Activated CD4-positive, alpha-beta memory T cell treated with anti-CD3 and anti-CD28 coated beads for 36 hours (primary cell): ENCODE measurements at regions of chr5 and their contacts with region 1.

Region 1: GRCh38 chr5:133025804-133026663 is at the start of gene ZCCHC10:
- DNase-seq: peak; percentile 95
- H3K4me3 Mint-ChIP-seq: peak within 1 kb of the TSS; percentile 79
- H3K27ac Mint-ChIP-seq: peak within 1 kb of the TSS; percentile 83
- H3K4me1 Mint-ChIP-seq: peaks cover 15% of the 10 kb centered on the region
- H3K27me3 Mint-ChIP-seq: no peaks in the 10 kb centered on the region
- total RNA-seq, gene ZCCHC10: 22.6 to 25.5 TPM

Region 2: DNA sequence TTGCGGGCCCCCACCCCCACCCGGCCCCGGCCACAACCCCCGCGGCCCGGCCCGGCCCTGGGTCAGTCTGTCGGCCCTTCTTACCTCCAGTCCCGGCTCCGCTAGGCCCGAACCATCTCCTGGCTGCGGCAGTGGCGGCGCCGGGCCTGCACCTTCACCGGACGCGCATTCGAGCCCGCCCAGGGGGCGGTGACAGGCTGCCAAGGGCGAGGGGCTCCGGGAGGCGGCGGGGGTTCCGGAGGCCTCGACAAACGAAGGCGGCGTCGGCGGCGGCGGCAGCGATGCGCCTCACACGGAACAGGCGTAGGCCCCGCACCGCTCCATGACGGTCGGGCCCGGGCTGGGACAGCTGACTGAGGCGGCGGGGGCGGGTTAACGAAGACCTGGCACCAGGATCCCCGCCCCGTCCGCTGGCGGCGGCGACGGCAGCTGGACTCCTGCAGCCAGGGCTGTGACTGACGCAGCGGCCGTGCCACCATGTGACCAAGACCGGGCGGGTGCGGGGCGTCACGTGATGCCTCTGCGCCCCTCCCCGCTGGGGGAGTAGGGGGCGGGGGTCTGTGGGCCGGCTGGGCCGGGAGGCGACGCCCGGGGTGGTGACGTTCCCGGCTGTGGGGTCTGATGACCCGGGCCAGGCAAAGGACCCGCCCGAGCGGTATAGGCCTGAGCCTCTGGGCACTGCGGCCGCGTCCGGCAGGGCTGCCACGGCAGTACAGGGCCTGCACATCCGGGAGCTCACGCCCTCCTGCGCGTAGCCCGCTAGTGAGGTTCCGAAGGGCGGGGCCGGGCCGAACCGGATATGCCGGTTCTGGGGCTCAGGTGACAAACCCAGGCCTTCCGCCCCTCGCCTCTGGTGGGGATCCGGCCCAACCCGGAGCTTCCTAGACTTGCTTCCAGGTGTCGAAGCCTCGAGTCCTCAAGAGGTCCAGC is 62.6 kb before region 1 on chr5 and contains the start of gene AFF4:
- CTCF ChIA-PET with region 1: no interaction called
- POLR2A ChIA-PET with region 1: interaction called, 4 read pairs
- intact Hi-C with region 1: loop called (anchors 2 kb)
- DNase-seq: peak; percentile 93
- H3K4me3 Mint-ChIP-seq: peak within 1 kb of the TSS; percentile 93
- H3K27ac Mint-ChIP-seq: peak within 1 kb of the TSS; percentile 98
- H3K4me1 Mint-ChIP-seq: peaks cover 29% of the 10 kb centered on the region
- H3K27me3 Mint-ChIP-seq: no peaks in the 10 kb centered on the region
- total RNA-seq, gene AFF4: 21.9 to 22.1 TPM

Region 3: DNA sequence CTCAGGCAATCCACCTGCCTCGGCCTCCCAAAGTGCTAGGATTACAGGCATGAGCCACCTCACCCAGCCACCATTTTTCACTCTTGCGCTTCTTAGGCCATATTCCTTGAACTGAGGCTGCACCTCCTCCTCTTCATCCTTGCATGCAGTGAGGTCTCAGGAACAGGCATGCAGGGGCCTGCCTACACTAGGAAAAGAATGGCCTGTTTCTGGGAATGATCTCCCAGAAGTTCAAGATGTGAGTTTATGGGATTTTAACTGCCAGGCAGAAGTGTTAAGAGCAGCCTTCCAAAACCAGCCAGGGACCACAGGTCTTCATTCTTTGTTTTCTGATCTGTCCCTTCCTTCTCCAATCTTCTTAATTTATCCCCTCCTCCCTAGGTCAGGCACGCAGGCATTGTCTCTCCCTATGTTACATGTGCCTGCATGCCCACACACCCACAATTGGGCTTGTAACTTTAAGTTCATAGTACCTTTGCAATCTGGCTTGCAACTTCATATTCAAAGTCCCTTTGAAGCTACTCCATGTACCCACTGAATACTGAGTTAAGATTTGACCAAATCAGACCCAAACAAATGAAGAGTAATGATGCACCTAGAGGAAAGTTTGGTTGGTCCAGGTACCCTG is 15.2 kb after region 1 on chr5:
- CTCF ChIA-PET with region 1: no interaction called
- POLR2A ChIA-PET with region 1: no interaction called
- intact Hi-C with region 1: no loop called
- DNase-seq: no peak
- H3K4me3 Mint-ChIP-seq: no peak overlapping the region
- H3K27ac Mint-ChIP-seq: no peak overlapping the region
- H3K4me1 Mint-ChIP-seq: no peaks in the 10 kb centered on the region
- H3K27me3 Mint-ChIP-seq: no peaks in the 10 kb centered on the region